ENCODE measurements at regions of chr1 and their contacts with region 1.

Region 1: GRCh38 chr1:33055210-33056008 is 18.7 kb upstream of the AK2 start:
- DNase-seq: peak; percentile 72 to 85 (median 74)
- H3K4me3 ChIP-seq: no peak overlapping the region
- H3K4me3 Mint-ChIP-seq: no peak overlapping the region
- H3K27ac ChIP-seq: no peak overlapping the region
- H3K27ac Mint-ChIP-seq: peak overlapping the region; percentile 19 to 78 (median 47)
- H3K4me1 ChIP-seq: peaks cover 23 to 25% of the 10 kb centered on the region in 2 donors
- H3K4me1 Mint-ChIP-seq: peaks cover 26% of the 10 kb centered on the region
- H3K27me3 ChIP-seq: no peaks in the 10 kb centered on the region
- H3K27me3 Mint-ChIP-seq: peaks cover 0 to 2% (median 0%) of the 10 kb centered on the region in 3 donors
- CTCF ChIP-seq: peak; percentile 80

Region 2: GRCh38 chr1:32933742-32934322 is 121.6 kb before region 1 on chr1:
- intact Hi-C with region 1: loop called (anchors 2 to 10 kb)
- DNase-seq: no peak
- H3K4me3 ChIP-seq: no peak overlapping the region
- H3K4me3 Mint-ChIP-seq: no peak overlapping the region
- H3K27ac ChIP-seq: no peak overlapping the region
- H3K27ac Mint-ChIP-seq: peak overlapping the region in 3 of 7 donors; percentile 0 to 68 (median 11)
- H3K4me1 ChIP-seq: peaks cover 0 to under 1% of the 10 kb centered on the region in 2 donors
- H3K4me1 Mint-ChIP-seq: peaks cover 7% of the 10 kb centered on the region
- H3K27me3 ChIP-seq: no peaks in the 10 kb centered on the region
- H3K27me3 Mint-ChIP-seq: peaks cover 0 to 2% (median 0%) of the 10 kb centered on the region in 3 donors
- CTCF ChIP-seq: peak; percentile 42

Region 3: GRCh38 chr1:32939655-32940371 is 115.6 kb before region 1 on chr1:
- intact Hi-C with region 1: loop called in 1 of 2 experiments (anchors 10 kb)
- DNase-seq: peak; percentile 45 to 83 (median 79)
- H3K4me3 ChIP-seq: peak overlapping the region in 1 of 3 experiments; percentile 26
- H3K4me3 Mint-ChIP-seq: peak overlapping the region in 1 of 2 donors; percentile 65
- H3K27ac ChIP-seq: peak overlapping the region; percentile 41 to 74
- H3K27ac Mint-ChIP-seq: peak overlapping the region; percentile 81 to 97 (median 87)
- H3K4me1 ChIP-seq: peaks cover 34 to 35% of the 10 kb centered on the region in 2 donors
- H3K4me1 Mint-ChIP-seq: peaks cover 38% of the 10 kb centered on the region
- H3K27me3 ChIP-seq: no peaks in the 10 kb centered on the region
- H3K27me3 Mint-ChIP-seq: peaks cover 0 to 3% (median 0%) of the 10 kb centered on the region in 3 donors
- CTCF ChIP-seq: no peak

Region 4: GRCh38 chr1:32992489-32993323 is 62.7 kb before region 1 on chr1:
- intact Hi-C with region 1: loop called in 1 of 2 experiments (anchors 2 kb)
- DNase-seq: peak; percentile 96 to 99 (median 97)
- H3K4me3 ChIP-seq: peak overlapping the region in 1 of 3 experiments; percentile 48
- H3K4me3 Mint-ChIP-seq: peak overlapping the region; percentile 53 to 77
- H3K27ac ChIP-seq: peak overlapping the region; percentile 97 to 100
- H3K27ac Mint-ChIP-seq: peak overlapping the region; percentile 99 to 100 (median 100)
- H3K4me1 ChIP-seq: peaks cover 97 to 100% of the 10 kb centered on the region in 2 donors
- H3K4me1 Mint-ChIP-seq: peaks cover 95% of the 10 kb centered on the region
- H3K27me3 ChIP-seq: no peaks in the 10 kb centered on the region
- H3K27me3 Mint-ChIP-seq: peaks cover 0 to 9% (median 2%) of the 10 kb centered on the region in 3 donors
- CTCF ChIP-seq: no peak

Region 5: DNA sequence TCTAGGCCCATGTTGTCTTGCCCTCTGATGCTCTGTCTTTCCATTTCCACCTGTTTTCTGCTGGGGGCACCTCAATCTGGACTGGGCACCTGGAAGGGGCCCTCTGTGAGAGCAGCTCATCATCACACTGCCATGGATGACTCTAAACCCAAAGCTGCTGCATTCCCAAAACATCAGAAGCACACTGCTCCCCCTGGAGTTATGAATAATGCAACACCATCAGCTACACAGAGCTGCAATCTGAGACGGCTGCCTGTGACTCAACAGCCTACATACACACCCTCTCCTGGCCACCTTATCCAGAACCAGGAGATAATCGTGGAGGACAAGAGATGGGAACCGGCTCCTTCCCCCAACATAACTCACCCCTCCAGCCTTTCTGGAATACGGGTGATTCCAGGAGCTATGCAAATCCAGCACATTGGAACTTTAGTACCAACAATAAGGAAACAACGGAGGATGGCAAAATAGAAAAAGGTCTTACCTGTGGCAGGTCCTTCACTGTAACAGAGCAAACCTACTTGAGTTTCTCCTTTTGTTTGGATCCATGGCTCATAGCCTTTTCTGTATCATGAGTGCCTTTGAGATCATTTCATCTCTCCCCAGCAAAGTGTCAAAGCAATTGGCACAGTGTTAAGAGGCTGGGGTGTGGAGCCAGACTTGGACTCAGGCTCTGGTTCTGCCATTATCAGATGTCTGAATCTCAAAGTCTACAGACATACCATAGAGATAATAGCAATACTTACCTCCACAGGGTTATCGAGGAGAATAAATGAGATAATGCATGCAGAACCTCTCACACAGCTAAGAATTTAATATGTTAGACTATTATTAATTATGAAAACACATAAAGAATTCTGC is 48.0 kb before region 1 on chr1:
- intact Hi-C with region 1: loop called in 1 of 2 experiments (anchors 10 kb)
- DNase-seq: peak; percentile 67 to 85 (median 80)
- H3K4me3 ChIP-seq: no peak overlapping the region
- H3K4me3 Mint-ChIP-seq: no peak overlapping the region
- H3K27ac ChIP-seq: peak overlapping the region in 1 of 2 donors; percentile 6
- H3K27ac Mint-ChIP-seq: peak overlapping the region in 6 of 7 donors; percentile 38 to 85 (median 66)
- H3K4me1 ChIP-seq: peaks cover 0 to 5% of the 10 kb centered on the region in 2 donors
- H3K4me1 Mint-ChIP-seq: peaks cover 24% of the 10 kb centered on the region
- H3K27me3 ChIP-seq: no peaks in the 10 kb centered on the region
- H3K27me3 Mint-ChIP-seq: no peaks in the 10 kb centered on the region
- CTCF ChIP-seq: peak; percentile 58

Region 6: DNA sequence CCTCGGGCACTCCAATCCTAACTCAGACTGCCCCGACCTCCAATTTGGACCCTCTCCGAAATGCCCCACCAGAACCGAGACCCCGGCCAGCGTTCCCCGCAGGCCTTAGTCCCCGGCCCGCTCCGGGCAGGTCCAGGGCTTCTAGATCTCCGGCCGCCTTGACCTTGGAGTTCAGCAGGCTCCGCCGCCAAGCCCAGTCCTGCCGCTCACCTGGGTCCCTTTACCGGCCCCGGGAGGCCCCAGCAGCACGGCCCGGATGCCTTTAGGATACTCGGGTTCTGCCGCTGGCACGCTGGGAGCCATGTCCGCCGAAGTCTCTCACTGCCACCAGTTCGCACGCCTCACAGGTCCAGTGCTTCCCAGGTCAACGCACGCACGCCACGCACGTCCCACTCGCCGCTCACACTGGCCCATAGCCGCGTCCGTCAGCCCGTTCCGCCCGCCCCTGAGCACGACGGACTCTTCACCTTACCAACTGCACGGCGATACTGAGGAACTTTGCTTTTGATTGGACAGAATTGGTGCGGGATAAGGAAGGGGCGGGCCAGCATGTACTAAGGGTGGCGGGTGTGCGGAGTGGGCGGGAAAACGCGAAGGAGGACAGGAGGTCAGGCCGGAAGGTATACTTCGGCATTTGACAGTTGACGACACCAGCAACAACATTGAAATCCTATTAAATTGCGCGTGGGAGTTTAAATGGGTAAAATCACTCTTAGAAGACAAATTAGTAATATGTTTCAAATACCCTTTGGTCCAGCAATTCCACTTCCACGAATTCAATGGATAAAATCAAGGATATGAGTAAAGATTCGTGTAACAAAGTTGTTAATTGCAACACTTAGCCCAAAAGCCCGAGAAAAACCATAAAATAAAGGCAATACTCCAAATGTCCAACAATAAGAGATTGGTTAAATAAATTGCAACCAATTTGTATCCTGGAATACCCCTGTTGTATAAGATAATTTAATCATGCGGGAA is 18.6 kb before region 1 on chr1 and contains the start of gene AK2:
- intact Hi-C with region 1: loop called in 1 of 2 experiments (anchors 2 kb)
- DNase-seq: peak; percentile 95 to 97 (median 96)
- H3K4me3 ChIP-seq: peak within 1 kb of the TSS; percentile 47 to 76 (median 72)
- H3K4me3 Mint-ChIP-seq: peak within 1 kb of the TSS; percentile 93 to 96
- H3K27ac ChIP-seq: peak within 1 kb of the TSS; percentile 84 to 91
- H3K27ac Mint-ChIP-seq: peak within 1 kb of the TSS; percentile 93 to 96 (median 95)
- H3K4me1 ChIP-seq: peaks cover 71 to 78% of the 10 kb centered on the region in 2 donors
- H3K4me1 Mint-ChIP-seq: peaks cover 75% of the 10 kb centered on the region
- H3K27me3 ChIP-seq: no peaks in the 10 kb centered on the region
- H3K27me3 Mint-ChIP-seq: peaks cover 0 to 2% (median 0%) of the 10 kb centered on the region in 3 donors
- CTCF ChIP-seq: no peak
- polyA plus RNA-seq, gene AK2: 68.8 to 180 (median 162) TPM